CD14-positive monocyte (primary cell): ENCODE measurements at regions of chr4 and their contacts with region 1.

Region 1: GRCh38 chr4:24988776-24989175 is 42.0 kb downstream of the LGI2 start:
- DNase-seq: peak; percentile 30 to 62 (median 60)
- H3K4me3 ChIP-seq: no peak overlapping the region
- H3K4me3 Mint-ChIP-seq: no peak overlapping the region
- H3K27ac ChIP-seq: no peak overlapping the region
- H3K27ac Mint-ChIP-seq: no peak overlapping the region
- H3K4me1 ChIP-seq: no peaks in the 10 kb centered on the region
- H3K4me1 Mint-ChIP-seq: no peaks in the 10 kb centered on the region
- H3K27me3 ChIP-seq: no peaks in the 10 kb centered on the region
- H3K27me3 Mint-ChIP-seq: peaks cover 2 to 8% (median 4%) of the 10 kb centered on the region in 3 donors
- CTCF ChIP-seq: peak; percentile 67

Region 2: DNA sequence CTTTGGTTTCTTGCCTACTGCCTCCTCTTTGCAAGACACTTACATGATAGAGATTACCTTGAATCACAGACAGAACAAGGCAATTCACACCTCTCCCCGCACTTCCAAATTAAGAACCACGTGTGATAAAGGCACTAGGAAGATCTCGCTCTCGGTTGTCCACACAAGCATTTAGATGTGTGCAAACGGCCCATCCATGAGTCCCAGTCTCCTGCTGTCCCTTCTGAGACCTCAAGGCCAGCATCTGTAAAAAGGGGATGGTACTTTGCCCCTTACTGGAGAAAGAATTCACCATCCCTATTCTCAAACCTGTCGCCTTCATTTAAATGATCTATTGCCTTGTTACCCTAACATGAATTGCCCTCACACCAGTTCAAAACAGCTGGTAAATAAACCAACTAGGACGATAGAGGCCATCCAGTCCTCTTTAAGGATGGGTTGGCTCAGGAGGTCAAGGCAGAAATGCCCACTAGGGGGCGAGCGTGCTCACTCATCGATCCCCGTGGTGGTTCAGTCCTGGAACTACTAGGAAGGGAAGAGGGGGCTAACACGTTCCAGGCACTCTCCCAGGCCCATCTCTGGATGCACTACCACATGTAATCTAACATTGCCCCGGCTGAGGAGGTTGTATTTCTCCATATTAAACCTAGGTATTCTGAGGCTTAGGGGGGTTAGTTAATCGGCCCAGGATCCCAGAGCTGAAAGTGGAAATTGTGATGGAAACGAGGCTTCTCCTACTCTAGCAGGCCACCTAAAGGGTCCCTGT is 500.2 kb before region 1 on chr4:
- intact Hi-C with region 1: loop called in 1 of 2 experiments (anchors 5 kb)
- DNase-seq: peak; percentile 37 to 58 (median 58)
- H3K4me3 ChIP-seq: no peak overlapping the region
- H3K4me3 Mint-ChIP-seq: peak overlapping the region in 1 of 2 donors; percentile 21
- H3K27ac ChIP-seq: no peak overlapping the region
- H3K27ac Mint-ChIP-seq: no peak overlapping the region
- H3K4me1 ChIP-seq: no peaks in the 10 kb centered on the region
- H3K4me1 Mint-ChIP-seq: no peaks in the 10 kb centered on the region
- H3K27me3 ChIP-seq: peaks cover 0 to 5% of the 10 kb centered on the region in 2 donors
- H3K27me3 Mint-ChIP-seq: peaks cover 1 to 3% (median 2%) of the 10 kb centered on the region in 3 donors
- CTCF ChIP-seq: peak; percentile 89

Region 3: DNA sequence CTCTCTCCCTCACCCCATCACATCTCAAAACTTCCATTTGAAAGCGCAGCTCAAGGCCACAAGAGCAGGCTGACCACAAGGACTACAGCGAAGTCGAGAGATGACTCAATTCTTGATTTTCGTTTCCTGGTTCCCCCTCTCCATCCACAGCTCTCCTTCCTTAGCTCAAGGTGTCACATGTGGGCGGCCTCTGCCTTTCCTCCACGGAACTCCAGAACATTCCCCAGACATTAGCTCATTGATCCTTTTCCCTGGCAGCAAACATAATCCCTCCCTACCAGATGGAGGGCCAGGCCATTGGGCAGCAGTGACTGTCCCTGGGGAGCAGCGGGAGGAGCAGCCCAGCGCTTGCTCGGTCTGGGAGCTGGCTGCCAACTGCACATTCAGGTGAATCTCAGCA is 132.2 kb before region 1 on chr4:
- intact Hi-C with region 1: no loop called
- DNase-seq: no peak
- H3K4me3 ChIP-seq: no peak overlapping the region
- H3K4me3 Mint-ChIP-seq: no peak overlapping the region
- H3K27ac ChIP-seq: no peak overlapping the region
- H3K27ac Mint-ChIP-seq: no peak overlapping the region
- H3K4me1 ChIP-seq: peaks cover 3 to 5% of the 10 kb centered on the region in 2 donors
- H3K4me1 Mint-ChIP-seq: peaks cover 26% of the 10 kb centered on the region
- H3K27me3 ChIP-seq: no peaks in the 10 kb centered on the region
- H3K27me3 Mint-ChIP-seq: no peaks in the 10 kb centered on the region
- CTCF ChIP-seq: no peak